Activated B cell treated with CpG ODN at 0.5 μM for 24 hours (primary cell): ENCODE measurements at regions of chr6 and their contacts with region 1.

Region 1: DNA sequence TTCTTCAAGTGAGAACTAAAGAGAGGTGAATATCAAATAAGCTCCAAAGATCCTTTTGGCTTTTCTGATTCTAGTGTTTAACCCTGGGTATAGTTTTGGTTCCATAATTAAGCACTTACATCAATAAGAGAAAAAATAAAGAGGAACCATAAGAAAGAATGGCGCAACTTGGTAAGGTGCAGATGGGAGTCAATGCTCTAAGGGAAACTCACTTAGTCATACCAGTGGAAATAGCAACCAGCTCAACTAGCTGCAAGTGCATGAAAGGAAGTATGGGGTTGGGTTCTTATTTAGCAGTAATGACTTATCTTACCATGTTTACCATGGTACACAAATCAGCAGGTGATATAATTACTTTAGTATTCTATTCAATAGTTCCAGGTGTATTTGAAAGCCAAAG is 296.5 kb upstream of the RUNX2 start:
- DNase-seq: no peak
- ATAC-seq: no peak
- H3K4me3 Mint-ChIP-seq: no peak overlapping the region
- H3K27ac Mint-ChIP-seq: no peak overlapping the region
- H3K4me1 Mint-ChIP-seq: no peaks in the 10 kb centered on the region
- H3K27me3 Mint-ChIP-seq: no peaks in the 10 kb centered on the region
- CTCF ChIP-seq: no peak

Region 2: GRCh38 chr6:45057711-45058110 is 26.1 kb after region 1 on chr6:
- CTCF ChIA-PET with region 1: no interaction called
- POLR2A ChIA-PET with region 1: interaction called, 10 read pairs
- intact Hi-C with region 1: no loop called
- DNase-seq: no peak
- ATAC-seq: no peak
- H3K4me3 Mint-ChIP-seq: no peak overlapping the region
- H3K27ac Mint-ChIP-seq: no peak overlapping the region
- H3K4me1 Mint-ChIP-seq: no peaks in the 10 kb centered on the region
- H3K27me3 Mint-ChIP-seq: no peaks in the 10 kb centered on the region
- CTCF ChIP-seq: no peak